ENCODE measurements at regions of chr3 and their contacts with region 1.

Region 1: DNA sequence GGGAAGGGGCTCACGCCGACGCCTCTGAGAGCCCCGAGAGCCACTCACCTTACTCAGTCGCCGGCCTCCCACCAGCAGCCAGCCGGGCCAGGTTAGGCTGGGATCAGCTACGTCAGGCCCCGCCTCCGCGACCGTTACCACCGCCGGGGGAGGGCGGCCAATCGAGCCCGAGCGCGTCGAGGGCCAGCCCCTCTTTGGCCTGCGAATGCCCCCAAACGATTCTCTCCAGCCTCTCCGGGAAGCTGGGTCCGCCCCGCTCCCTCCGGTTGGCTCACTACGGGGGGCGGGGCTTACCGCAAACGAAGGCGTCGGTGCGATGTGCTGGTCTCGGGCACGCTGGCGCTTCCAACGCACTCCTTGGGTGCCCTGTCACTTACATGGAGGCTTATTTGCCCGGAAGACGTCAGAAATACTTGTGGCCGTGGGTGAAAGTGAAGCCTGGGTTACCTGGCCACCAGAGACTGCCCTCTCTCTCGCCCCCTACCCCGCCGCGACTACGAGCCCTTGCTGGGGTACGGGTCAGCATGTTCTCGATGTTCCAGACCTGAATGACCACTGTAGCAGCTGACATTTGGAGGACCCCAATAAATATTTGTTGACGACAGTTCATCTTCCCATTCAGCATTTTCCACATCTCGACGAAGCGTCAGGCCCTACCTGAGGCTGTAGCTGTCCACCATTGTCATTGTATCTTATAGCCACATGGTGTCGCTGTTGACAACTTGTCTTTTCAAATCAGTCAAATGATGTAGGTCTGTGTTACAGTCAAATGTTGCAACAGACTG is at the start of gene CEP70:
- H3K4me3 ChIP-seq: peak within 1 kb of the TSS; percentile 89
- H3K27ac ChIP-seq: peak within 1 kb of the TSS; percentile 59
- H3K4me1 ChIP-seq: no peaks in the 10 kb centered on the region
- CTCF ChIP-seq: peak; percentile 89

Region 2: GRCh38 chr3:138417559-138417982 is 176.8 kb before region 1 on chr3:
- CTCF ChIA-PET with region 1: interaction called, 17 read pairs
- POLR2A ChIA-PET with region 1: no interaction called
- H3K4me3 ChIP-seq: no peak overlapping the region
- H3K27ac ChIP-seq: no peak overlapping the region
- H3K4me1 ChIP-seq: no peaks in the 10 kb centered on the region
- CTCF ChIP-seq: peak; percentile 68

Region 3: DNA sequence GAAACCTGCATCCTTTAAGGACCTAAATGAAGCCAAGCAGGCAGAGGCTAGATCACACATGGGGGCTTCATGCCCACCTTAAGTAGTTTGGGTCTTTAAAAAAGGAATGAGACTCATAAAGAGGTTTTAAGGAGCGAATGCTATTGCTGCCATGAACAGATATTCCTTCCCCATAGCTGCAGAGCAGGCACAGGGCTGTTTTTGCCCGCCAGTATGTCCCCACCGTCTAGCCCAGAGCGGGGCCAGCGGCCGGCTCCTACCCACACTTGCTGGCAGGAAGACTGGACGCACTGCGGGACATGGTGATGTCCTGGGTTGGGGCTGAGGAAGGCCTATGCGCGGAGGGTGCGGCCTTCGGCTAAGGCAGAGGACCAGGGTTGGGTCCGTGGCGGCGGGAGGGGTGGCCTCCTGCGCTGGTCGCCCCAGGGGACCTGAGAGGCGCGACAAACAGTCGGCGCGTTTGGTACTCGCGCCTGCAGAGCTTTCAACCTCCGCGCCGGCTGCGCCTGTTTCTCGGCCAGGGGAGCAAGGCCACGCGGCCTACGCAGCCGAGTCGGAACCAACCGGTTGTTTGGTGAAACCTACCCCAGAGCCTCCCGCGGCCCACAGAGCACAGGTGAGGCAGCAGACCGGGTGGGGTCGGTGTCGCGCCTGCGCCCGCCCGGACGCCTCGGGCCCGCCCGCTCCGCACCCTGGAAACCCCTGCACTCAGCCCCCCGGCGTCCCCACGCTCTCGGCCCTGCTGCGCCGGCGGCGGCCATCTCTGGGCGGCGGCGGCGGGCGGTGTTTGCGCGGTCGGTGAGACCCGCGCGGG is 14.2 kb after region 1 on chr3 and contains the start of gene FAIM:
- CTCF ChIA-PET with region 1: no interaction called
- POLR2A ChIA-PET with region 1: interaction called, 21 read pairs
- H3K4me3 ChIP-seq: peak within 1 kb of the TSS; percentile 79
- H3K27ac ChIP-seq: peak within 1 kb of the TSS; percentile 94
- H3K4me1 ChIP-seq: peaks cover 4% of the 10 kb centered on the region; the same call in 1 of the 2 replicates
- CTCF ChIP-seq: peak; percentile 34; the same call in 1 of the 2 replicates

Region 4: DNA sequence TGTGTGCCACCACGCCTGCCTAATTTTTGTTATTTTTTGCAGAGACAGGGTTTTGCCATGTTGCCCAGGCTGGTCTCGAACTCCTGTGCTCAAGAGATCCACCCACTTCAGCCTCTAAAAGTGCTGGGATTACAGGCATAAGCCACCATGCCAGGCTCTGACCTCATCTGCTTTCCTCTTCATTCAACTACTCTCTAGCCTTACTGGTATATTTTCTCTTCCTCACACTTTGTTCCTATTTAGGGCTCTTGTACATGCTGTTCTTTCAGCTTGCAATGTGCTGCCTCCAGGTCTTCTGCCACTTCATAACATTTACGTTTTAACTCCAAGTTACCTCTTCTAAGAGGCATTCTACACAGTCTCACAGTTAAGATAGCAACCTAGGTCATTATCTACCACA is 205.5 kb after region 1 on chr3:
- CTCF ChIA-PET with region 1: no interaction called
- POLR2A ChIA-PET with region 1: no interaction called
- H3K4me3 ChIP-seq: no peak overlapping the region
- H3K27ac ChIP-seq: no peak overlapping the region
- H3K4me1 ChIP-seq: no peaks in the 10 kb centered on the region
- CTCF ChIP-seq: no peak

Region 5: GRCh38 chr3:138909904-138910303 is 315.6 kb after region 1 on chr3:
- CTCF ChIA-PET with region 1: interaction called, 47 read pairs
- POLR2A ChIA-PET with region 1: interaction called, 23 read pairs
- H3K4me3 ChIP-seq: no peak overlapping the region
- H3K27ac ChIP-seq: no peak overlapping the region
- H3K4me1 ChIP-seq: no peaks in the 10 kb centered on the region
- CTCF ChIP-seq: no peak

Region 6: GRCh38 chr3:138935848-138936740 is 341.8 kb after region 1 on chr3:
- CTCF ChIA-PET with region 1: interaction called, 3 read pairs
- POLR2A ChIA-PET with region 1: interaction called, 10 read pairs
- H3K4me3 ChIP-seq: peak overlapping the region; percentile 49
- H3K27ac ChIP-seq: no peak overlapping the region
- H3K4me1 ChIP-seq: no peaks in the 10 kb centered on the region
- CTCF ChIP-seq: peak; percentile 88

Measured in HEK293 (cell line).